CD8-positive, alpha-beta T cell (primary cell): ENCODE measurements at regions of chr19 and their contacts with region 1.

Region 1: DNA sequence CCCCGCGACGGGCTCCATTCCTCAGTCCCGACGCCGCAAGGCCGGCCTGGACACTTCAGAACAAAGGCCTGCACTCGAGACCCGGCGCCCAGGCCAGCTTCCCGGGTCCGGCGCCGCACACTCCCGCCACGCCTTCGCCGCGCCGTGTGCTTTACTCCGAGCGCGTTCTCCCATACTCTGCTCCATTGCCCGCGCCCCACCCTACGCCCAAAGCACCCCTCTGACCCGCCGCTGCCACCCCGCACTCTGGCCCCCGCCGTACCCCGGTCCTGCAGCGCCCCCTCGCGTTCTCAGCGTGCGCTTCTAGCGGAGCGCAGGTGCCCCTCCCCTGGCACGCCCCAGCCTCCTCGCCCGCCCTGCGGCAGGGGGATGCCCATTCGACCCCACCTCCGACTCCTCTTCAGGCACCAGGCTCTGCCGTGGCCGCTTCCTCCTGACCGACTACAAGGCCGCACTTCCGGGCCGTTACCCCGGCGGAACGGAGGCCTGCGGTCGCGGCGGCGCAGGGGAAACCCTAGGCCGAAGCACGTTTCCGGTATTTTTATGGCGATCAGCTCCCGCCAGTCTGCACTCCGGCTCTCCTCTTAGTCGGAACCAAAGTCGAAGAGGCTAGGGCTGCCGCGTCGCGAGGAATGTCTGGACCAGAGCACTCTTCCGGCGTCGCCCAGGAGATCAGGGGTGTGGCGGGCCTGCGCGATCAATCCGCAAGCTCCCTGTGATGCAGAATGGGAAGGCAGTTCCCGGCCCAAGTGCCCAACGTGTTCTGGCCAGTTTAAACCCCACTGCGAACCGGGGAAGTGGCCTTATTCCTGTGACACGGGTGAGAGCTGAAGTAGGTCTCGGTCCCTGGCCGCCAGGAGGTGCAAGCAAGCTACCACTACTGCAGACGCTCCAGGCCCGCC is at the start of gene ZBTB45:
- DNase-seq: peak; percentile 73 to 96 (median 87)
- ATAC-seq: peak; percentile 80
- H3K4me3 ChIP-seq: peak within 1 kb of the TSS; percentile 63 to 91
- H3K4me3 Mint-ChIP-seq: peak within 1 kb of the TSS; percentile 95
- H3K27ac ChIP-seq: peak within 1 kb of the TSS; percentile 74 to 90
- H3K27ac Mint-ChIP-seq: peak within 1 kb of the TSS; percentile 97
- H3K4me1 ChIP-seq: peaks cover 23% of the 10 kb centered on the region
- H3K4me1 Mint-ChIP-seq: peaks cover 43% of the 10 kb centered on the region
- H3K27me3 ChIP-seq: no peaks in the 10 kb centered on the region
- H3K27me3 Mint-ChIP-seq: no peaks in the 10 kb centered on the region
- CTCF ChIP-seq: peak; percentile 57
- total RNA-seq, gene ZBTB45: 4.8 to 5.6 TPM

Region 2: DNA sequence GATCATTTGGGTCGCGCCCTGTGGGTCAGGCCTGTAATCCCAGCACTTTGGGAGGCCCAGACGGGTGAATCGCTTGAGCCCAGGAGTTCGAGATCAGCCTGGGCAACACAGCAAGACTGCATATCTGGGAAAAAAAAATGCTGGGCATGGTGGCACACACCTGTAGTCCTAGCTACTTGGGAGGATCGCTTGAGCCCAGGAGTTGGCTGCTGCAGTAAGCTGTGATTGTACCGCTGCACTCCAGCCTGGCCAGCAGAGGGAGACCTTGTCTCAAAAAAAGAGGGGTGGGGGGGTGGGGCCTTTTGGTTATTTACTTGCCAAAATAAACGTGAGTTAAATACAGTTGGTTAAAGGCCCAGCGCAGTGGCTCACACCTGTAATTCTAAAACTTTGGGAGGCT is 300.7 kb before region 1 on chr19:
- CTCF ChIA-PET with region 1: no interaction called
- POLR2A ChIA-PET with region 1: no interaction called
- intact Hi-C with region 1: loop called in 1 of 2 experiments (anchors 2 kb)
- DNase-seq: peak in 5 of 9 experiments; percentile 15 to 47 (median 36)
- ATAC-seq: no peak
- H3K4me3 ChIP-seq: no peak overlapping the region
- H3K4me3 Mint-ChIP-seq: no peak overlapping the region
- H3K27ac ChIP-seq: no peak overlapping the region
- H3K27ac Mint-ChIP-seq: no peak overlapping the region
- H3K4me1 ChIP-seq: no peaks in the 10 kb centered on the region
- H3K4me1 Mint-ChIP-seq: no peaks in the 10 kb centered on the region
- H3K27me3 ChIP-seq: peaks cover 0 to 2% of the 10 kb centered on the region in 2 experiments
- H3K27me3 Mint-ChIP-seq: no peaks in the 10 kb centered on the region
- CTCF ChIP-seq: peak; percentile 26

Region 3: GRCh38 chr19:58243351-58243750 is 276.3 kb before region 1 on chr19:
- CTCF ChIA-PET with region 1: no interaction called
- POLR2A ChIA-PET with region 1: no interaction called
- intact Hi-C with region 1: no loop called
- DNase-seq: no peak
- ATAC-seq: no peak
- H3K4me3 ChIP-seq: no peak overlapping the region
- H3K4me3 Mint-ChIP-seq: no peak overlapping the region
- H3K27ac ChIP-seq: no peak overlapping the region
- H3K27ac Mint-ChIP-seq: no peak overlapping the region
- H3K4me1 ChIP-seq: no peaks in the 10 kb centered on the region
- H3K4me1 Mint-ChIP-seq: no peaks in the 10 kb centered on the region
- H3K27me3 ChIP-seq: no peaks in the 10 kb centered on the region
- H3K27me3 Mint-ChIP-seq: no peaks in the 10 kb centered on the region
- CTCF ChIP-seq: no peak

Region 4: GRCh38 chr19:58380722-58381466 is 138.7 kb before region 1 on chr19 and contains the start of gene ZNF837:
- CTCF ChIA-PET with region 1: interaction called, 3 read pairs
- POLR2A ChIA-PET with region 1: no interaction called
- intact Hi-C with region 1: loop called in 1 of 2 experiments (anchors 2 kb)
- DNase-seq: peak; percentile 94 to 100 (median 97)
- ATAC-seq: peak; percentile 82
- H3K4me3 ChIP-seq: peak within 1 kb of the TSS; percentile 62 to 92
- H3K4me3 Mint-ChIP-seq: peak within 1 kb of the TSS; percentile 98
- H3K27ac ChIP-seq: peak within 1 kb of the TSS; percentile 90 to 96
- H3K27ac Mint-ChIP-seq: peak within 1 kb of the TSS; percentile 98
- H3K4me1 ChIP-seq: peaks cover 31% of the 10 kb centered on the region
- H3K4me1 Mint-ChIP-seq: peaks cover 35% of the 10 kb centered on the region
- H3K27me3 ChIP-seq: no peaks in the 10 kb centered on the region
- H3K27me3 Mint-ChIP-seq: no peaks in the 10 kb centered on the region
- CTCF ChIP-seq: no peak
- total RNA-seq, gene ZNF837: 1.2 to 1.3 TPM

Region 5: DNA sequence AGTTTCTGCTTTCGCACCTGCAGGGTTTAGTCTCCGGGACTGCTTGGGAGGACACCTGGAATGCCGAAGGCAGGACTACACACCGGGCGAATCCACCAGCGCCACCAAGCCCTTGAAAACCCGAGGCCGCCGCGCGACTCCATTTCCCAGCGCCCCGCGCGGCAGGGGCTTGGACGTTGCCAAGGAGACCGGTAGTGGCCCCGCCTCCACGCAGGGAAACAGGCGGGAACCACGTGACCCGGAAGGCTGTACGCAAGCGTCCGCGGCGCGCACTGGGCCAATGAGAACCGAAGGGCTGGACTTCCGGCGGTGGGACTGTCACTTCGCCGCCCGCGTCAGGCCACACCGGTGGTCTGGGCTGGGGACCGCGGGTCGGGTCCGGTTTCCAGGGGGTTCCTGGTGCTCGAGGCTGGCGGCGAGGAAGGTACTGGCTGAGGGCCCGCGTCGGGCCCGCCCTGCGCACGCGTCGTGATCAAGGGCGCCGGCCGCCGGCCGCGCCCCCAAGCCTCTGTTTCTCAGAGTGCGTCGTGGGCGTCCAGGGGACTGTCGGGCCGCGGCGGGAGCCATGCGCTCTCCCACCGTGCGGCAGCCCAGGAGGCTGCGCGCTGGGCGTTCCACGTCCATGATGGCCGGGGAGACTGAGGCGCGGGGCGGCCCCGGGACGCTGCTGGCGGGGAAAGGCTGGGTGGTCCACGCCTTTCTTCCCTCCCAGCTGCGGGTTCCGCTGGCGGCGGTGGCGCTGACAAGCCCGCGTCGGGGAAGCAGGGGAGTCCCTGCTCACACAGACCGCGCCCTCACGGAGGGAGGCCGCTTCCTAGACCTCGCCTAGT is 52.6 kb before region 1 on chr19 and contains the start of gene ZNF324:
- CTCF ChIA-PET with region 1: no interaction called
- POLR2A ChIA-PET with region 1: no interaction called
- intact Hi-C with region 1: loop called in 1 of 2 experiments (anchors 1 kb)
- DNase-seq: peak; percentile 93 to 99 (median 98)
- ATAC-seq: peak; percentile 88
- H3K4me3 ChIP-seq: peak within 1 kb of the TSS; percentile 63 to 93
- H3K4me3 Mint-ChIP-seq: peak within 1 kb of the TSS; percentile 87
- H3K27ac ChIP-seq: peak within 1 kb of the TSS; percentile 88 to 91
- H3K27ac Mint-ChIP-seq: peak within 1 kb of the TSS; percentile 89
- H3K4me1 ChIP-seq: peaks cover 10% of the 10 kb centered on the region
- H3K4me1 Mint-ChIP-seq: peaks cover 25% of the 10 kb centered on the region
- H3K27me3 ChIP-seq: peaks cover 0 to 3% of the 10 kb centered on the region in 2 experiments
- H3K27me3 Mint-ChIP-seq: no peaks in the 10 kb centered on the region
- CTCF ChIP-seq: no peak
- total RNA-seq, gene ZNF324: 26.9 to 30.5 TPM

Region 6: GRCh38 chr19:58543826-58544590 is 24.4 kb after region 1 on chr19 and contains the start of gene TRIM28:
- CTCF ChIA-PET with region 1: interaction called, 4 read pairs
- POLR2A ChIA-PET with region 1: interaction called, 63 read pairs
- intact Hi-C with region 1: loop called (anchors 1 kb)
- DNase-seq: peak; percentile 99 to 100 (median 100)
- ATAC-seq: peak; percentile 85
- H3K4me3 ChIP-seq: peak within 1 kb of the TSS; percentile 68 to 71
- H3K4me3 Mint-ChIP-seq: peak within 1 kb of the TSS; percentile 93
- H3K27ac ChIP-seq: peak within 1 kb of the TSS; percentile 90 to 93
- H3K27ac Mint-ChIP-seq: peak within 1 kb of the TSS; percentile 99
- H3K4me1 ChIP-seq: peaks cover 17% of the 10 kb centered on the region
- H3K4me1 Mint-ChIP-seq: peaks cover 24% of the 10 kb centered on the region
- H3K27me3 ChIP-seq: peaks cover 0 to 13% of the 10 kb centered on the region in 2 experiments
- H3K27me3 Mint-ChIP-seq: peaks cover 10% of the 10 kb centered on the region
- CTCF ChIP-seq: no peak
- total RNA-seq, gene TRIM28: 525 to 549 TPM

Region 7: GRCh38 chr19:58581227-58582151 is 61.9 kb after region 1 on chr19:
- CTCF ChIA-PET with region 1: interaction called, 72 read pairs
- POLR2A ChIA-PET with region 1: interaction called, 17 read pairs
- intact Hi-C with region 1: loop called (anchors 1 kb)
- DNase-seq: peak; percentile 81 to 93 (median 91)
- ATAC-seq: peak; percentile 100
- H3K4me3 ChIP-seq: no peak overlapping the region
- H3K4me3 Mint-ChIP-seq: no peak overlapping the region
- H3K27ac ChIP-seq: peak overlapping the region in 1 of 2 experiments; percentile 56
- H3K27ac Mint-ChIP-seq: peak overlapping the region; percentile 82
- H3K4me1 ChIP-seq: peaks cover 6% of the 10 kb centered on the region
- H3K4me1 Mint-ChIP-seq: peaks cover 11% of the 10 kb centered on the region
- H3K27me3 ChIP-seq: no peaks in the 10 kb centered on the region
- H3K27me3 Mint-ChIP-seq: no peaks in the 10 kb centered on the region
- CTCF ChIP-seq: peak; percentile 88